ENCODE measurements at regions of chr3 and their contacts with region 1.

Region 1: DNA sequence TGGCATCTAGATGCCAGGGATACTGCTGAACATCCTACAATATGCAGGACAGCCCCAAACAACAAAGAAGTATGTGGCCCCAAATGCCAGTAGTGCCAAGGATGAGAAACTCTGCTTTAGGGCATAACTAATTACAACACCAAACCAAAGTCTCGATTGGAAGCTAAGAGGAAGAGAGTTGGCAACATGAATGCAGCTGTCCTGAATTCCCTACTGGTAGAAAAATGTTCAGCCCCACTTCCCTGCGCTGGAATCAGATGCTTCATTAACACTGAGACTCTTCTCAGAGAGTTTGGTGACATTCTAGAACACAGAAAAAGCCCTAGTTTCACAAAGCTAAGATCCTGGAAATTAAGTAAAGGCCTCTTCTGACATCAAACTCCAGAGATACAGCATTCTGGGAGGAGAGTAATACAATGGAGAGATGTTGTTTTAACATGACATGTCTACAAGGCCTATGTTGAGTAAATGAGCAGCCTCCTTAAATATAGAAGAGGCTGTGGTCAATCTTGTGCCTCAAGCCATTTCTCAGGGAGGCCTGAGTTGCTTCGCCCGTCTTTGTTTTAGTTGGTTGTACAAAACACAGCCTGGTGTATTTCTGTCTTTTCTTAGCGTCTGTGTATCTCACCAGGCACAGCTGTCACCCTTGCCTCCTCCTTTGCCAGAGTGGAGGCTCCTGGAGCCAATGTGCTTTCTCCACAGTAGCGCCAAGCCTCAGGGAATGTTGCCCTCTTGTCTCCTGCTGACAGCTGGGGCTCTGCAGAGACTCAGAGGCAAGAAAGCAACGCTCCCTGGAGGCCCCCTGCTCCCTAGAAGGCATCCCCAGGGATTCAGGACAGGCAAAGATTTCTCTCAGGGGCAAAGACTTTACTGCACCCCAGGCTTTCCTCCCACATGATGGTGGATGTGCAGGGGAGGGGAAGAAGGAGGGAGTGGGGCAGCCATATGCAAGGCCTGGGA is 25.1 kb upstream of the CTNNB1 start:
- DNase-seq: no peak
- ATAC-seq: no peak
- H3K4me3 ChIP-seq: no peak overlapping the region
- H3K27ac ChIP-seq: no peak overlapping the region
- H3K4me1 ChIP-seq: no peaks in the 10 kb centered on the region
- H3K27me3 ChIP-seq: peaks cover 54% of the 10 kb centered on the region
- CTCF ChIP-seq: no peak
- POLR2A ChIP-seq: no peak
- RAD21 ChIP-seq: no peak

Region 2: GRCh38 chr3:41102053-41102556 is 72.1 kb before region 1 on chr3:
- CTCF ChIA-PET with region 1: no interaction called
- POLR2A ChIA-PET with region 1: no interaction called
- RAD21 ChIA-PET with region 1: no interaction called
- intact Hi-C with region 1: no loop called
- DNase-seq: no peak
- ATAC-seq: no peak
- H3K4me3 ChIP-seq: no peak overlapping the region
- H3K27ac ChIP-seq: no peak overlapping the region
- H3K4me1 ChIP-seq: no peaks in the 10 kb centered on the region
- H3K27me3 ChIP-seq: no peaks in the 10 kb centered on the region
- CTCF ChIP-seq: no peak
- POLR2A ChIP-seq: no peak
- RAD21 ChIP-seq: no peak

Region 3: DNA sequence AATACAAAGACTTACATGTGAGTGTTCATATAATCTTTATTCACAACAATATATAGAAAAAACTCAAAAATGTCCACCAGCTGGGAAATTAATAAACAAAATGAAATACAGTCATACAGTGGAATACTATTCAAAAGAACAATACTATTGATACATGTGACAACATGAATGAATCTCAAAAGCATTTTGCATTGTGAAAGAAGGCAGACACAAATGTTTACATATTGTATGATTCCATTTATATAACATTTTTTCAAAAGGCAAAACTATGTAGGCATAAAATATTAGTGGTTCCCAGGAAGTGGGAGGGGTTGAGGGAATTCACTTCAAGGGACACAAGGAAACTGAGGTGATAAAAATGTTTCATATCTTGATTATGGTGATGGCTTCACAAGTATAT is 328.3 kb after region 1 on chr3:
- CTCF ChIA-PET with region 1: no interaction called
- POLR2A ChIA-PET with region 1: no interaction called
- RAD21 ChIA-PET with region 1: interaction called in 1 of 2 experiments, 12 read pairs
- intact Hi-C with region 1: no loop called
- DNase-seq: no peak
- ATAC-seq: no peak
- H3K4me3 ChIP-seq: no peak overlapping the region
- H3K27ac ChIP-seq: no peak overlapping the region
- H3K4me1 ChIP-seq: no peaks in the 10 kb centered on the region; a peak in 1 of 4 replicates
- H3K27me3 ChIP-seq: no peaks in the 10 kb centered on the region
- CTCF ChIP-seq: no peak
- POLR2A ChIP-seq: no peak
- RAD21 ChIP-seq: no peak